Activated CD8-positive, alpha-beta T cell treated with anti-CD3 and anti-CD28 coated beads for 36 hours (primary cell): ENCODE measurements at regions of chr7 and their contacts with region 1.

Region 1: DNA sequence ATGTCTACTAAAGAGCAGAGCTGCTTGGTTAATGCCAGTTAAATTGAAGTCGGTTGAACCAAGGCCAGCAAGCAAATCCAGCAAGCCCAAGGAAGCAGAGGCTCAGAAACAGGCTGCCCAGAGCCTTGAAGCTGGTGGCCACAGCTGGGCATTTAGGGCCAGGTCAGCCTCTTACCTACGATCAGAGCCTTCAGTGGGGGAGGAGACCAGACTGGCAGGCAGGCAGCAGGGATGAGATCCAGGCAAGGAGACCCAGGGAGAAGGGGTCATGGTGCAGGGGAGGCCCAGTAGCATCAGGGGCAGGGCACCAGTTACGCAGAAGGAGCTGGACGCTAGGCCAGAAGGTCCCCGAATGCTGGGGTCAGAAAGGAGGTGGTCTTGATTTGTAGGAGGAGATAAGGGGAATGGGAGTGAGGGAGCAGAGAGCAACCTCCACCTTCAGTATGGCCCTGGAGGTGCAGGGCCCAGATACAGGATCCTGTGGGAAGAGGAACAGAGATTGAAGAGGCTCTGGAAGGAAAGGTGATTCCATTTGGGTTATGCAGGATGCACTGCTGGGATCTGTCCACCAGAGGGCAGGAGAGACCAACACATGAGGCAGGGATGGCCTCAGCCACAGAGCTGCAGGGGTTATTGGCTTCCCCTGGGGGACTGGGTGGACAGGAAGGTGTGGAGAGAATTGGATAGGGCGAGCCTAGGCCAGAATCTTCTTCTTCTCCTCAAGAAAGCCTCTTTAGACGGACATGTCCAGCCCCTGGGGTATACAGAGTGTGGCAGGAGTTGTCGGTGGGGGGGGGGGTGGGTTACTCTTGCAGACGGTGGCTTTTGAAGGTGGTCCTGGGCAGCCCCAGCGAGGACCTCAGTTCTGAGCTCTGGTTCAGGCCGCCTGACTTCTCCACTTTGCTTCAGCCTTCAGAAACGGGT is 132.6 kb upstream of the PODXL start:
- DNase-seq: peak; percentile 70
- ATAC-seq: peak; percentile 74
- H3K4me3 Mint-ChIP-seq: no peak overlapping the region
- H3K27ac Mint-ChIP-seq: no peak overlapping the region
- H3K4me1 Mint-ChIP-seq: no peaks in the 10 kb centered on the region
- H3K27me3 Mint-ChIP-seq: peaks cover 32% of the 10 kb centered on the region
- CTCF ChIP-seq: peak; percentile 85

Region 2: GRCh38 chr7:131699323-131699722 is 10.3 kb after region 1 on chr7:
- CTCF ChIA-PET with region 1: interaction called, 45 read pairs
- POLR2A ChIA-PET with region 1: no interaction called
- intact Hi-C with region 1: no loop called
- DNase-seq: no peak
- ATAC-seq: no peak
- H3K4me3 Mint-ChIP-seq: no peak overlapping the region
- H3K27ac Mint-ChIP-seq: no peak overlapping the region
- H3K4me1 Mint-ChIP-seq: no peaks in the 10 kb centered on the region
- H3K27me3 Mint-ChIP-seq: peaks cover 4% of the 10 kb centered on the region
- CTCF ChIP-seq: no peak

Region 3: DNA sequence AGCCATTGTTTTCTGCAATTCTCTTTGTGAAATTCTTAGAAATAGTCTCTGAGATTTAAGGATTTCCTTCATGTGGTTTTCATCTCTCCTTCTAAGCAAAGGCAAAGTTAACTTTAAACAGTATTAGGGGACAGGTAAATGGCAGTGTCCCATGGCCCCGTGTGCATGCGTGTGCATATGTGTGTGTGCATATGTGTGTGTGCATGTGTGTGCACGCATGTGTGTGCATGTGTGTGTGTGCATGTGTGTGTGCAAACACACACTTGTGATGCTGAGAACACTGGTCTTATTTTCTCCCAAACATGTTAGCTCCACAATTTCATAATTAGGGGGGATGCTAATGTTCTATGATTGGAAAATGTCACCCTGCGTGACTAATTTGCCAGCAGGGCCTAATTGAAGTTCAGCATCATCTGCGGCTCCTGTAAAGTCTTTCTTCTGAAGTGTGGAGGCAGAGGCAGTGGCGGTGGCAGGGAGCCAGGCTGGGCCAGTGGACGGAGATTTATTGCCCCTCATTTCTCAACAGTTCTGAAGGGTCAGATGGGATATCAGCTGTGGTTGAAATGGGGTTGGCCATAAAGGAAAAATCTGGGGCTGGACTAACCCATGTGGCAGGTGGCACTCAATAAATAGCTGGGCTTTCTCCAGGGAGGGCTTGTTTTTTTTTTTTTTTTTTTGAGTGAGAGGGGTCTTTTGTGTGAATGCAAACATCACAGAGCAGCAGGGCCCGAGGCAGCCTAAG is 156.7 kb after region 1 on chr7:
- CTCF ChIA-PET with region 1: no interaction called
- POLR2A ChIA-PET with region 1: no interaction called
- intact Hi-C with region 1: loop called (anchors 5 kb)
- DNase-seq: no peak
- ATAC-seq: no peak
- H3K4me3 Mint-ChIP-seq: no peak overlapping the region
- H3K27ac Mint-ChIP-seq: no peak overlapping the region
- H3K4me1 Mint-ChIP-seq: no peaks in the 10 kb centered on the region
- H3K27me3 Mint-ChIP-seq: no peaks in the 10 kb centered on the region
- CTCF ChIP-seq: no peak

Region 4: DNA sequence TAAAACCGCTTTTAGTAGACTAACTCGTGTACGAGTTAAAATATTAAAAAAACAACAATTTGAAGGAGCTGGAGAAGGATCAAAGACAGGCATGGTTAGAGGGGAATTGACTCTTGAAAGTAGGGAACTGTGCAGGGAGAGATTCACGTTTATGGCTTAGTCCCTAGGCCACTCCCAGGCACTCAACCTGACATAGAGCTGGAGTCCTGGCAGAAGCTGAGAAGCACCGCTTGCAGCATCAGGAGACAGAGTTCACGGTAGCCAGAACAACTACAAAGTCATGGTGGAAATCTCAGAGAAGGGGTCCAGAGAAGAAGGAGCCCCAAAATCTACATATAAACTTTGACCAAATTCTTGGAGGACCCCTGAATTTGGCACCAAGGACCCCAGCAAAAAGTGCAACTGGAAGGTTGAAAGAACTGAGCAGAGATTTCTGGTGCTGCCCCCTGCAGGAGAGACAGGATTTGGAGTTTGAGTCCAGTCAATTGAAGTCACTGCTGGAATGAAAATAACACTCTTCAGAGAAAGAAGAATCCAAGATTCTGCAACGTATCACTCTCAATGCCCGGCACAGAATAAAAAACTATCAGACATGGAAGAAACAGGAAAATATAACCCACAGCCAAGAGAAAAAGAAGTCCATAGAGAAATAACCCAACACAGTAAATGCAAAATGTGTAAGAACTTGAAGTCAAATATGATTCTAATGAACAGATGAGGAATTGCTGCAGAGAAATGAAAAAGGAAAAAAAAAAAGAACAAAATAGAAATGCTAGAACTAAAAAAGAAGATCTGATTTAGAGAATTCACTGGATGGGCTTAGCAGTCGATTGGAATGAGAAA is 360.7 kb after region 1 on chr7:
- CTCF ChIA-PET with region 1: interaction called, 10 read pairs
- POLR2A ChIA-PET with region 1: no interaction called
- intact Hi-C with region 1: loop called (anchors 10 kb)
- DNase-seq: peak; percentile 58
- ATAC-seq: no peak
- H3K4me3 Mint-ChIP-seq: no peak overlapping the region
- H3K27ac Mint-ChIP-seq: no peak overlapping the region
- H3K4me1 Mint-ChIP-seq: no peaks in the 10 kb centered on the region
- H3K27me3 Mint-ChIP-seq: peaks cover 19% of the 10 kb centered on the region
- CTCF ChIP-seq: peak; percentile 59